MCF 10A (cell line): ENCODE measurements at regions of chr1 and their contacts with region 1.

Region 1: DNA sequence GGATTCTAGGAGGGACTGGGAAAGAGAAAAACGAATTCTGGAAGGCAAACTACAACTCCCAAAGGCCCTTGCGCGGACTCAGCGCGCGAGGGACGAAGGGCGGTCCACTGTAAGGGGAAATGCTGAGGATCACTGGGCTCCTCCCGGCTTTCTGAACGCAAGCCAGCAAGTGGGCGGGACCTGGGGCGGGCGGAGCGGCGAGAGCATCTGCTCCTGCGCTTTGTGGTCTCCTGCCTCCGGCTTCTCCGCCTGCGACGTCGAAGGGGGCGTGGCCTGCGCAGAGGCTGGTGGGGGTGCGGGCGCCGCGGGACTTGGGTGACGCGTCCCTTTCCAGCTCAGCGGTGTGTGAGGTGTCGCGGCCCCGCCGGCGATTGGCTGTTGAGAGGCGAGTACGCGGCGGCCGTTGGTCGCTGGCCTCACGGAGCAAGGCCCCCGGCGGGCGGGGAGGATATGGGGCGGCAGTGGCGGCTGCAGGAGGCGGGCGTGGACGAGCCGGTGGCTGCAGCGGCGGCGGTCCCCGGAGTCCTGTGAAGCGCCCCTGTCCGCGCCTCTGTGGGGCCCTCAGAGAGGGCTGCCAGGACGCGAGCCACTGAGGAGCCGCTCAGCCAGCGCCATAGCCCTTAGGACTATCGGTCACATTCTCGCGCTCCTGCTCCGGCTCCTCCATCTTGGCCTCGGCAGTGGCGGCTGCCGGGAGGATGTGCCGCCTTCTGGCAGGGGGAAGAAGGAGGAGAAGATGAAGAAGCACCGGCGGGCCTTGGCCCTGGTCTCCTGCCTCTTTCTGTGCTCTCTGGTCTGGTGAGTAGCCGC is at the start of gene SUCO:
- DNase-seq: peak; percentile 100
- H3K4me3 Mint-ChIP-seq: peak within 1 kb of the TSS; percentile 90
- H3K27ac Mint-ChIP-seq: peak within 1 kb of the TSS; percentile 98
- H3K4me1 Mint-ChIP-seq: peaks cover 38% of the 10 kb centered on the region
- H3K27me3 Mint-ChIP-seq: no peaks in the 10 kb centered on the region
- CTCF ChIP-seq: no peak
- total RNA-seq, gene SUCO: 47.9 and 54.3 TPM in 2 replicates

Region 2: GRCh38 chr1:172054172-172054571 is 478.7 kb before region 1 on chr1:
- CTCF ChIA-PET with region 1: no interaction called
- POLR2A ChIA-PET with region 1: no interaction called
- intact Hi-C with region 1: no loop called
- DNase-seq: peak; percentile 18
- H3K4me3 Mint-ChIP-seq: no peak overlapping the region
- H3K27ac Mint-ChIP-seq: no peak overlapping the region
- H3K4me1 Mint-ChIP-seq: peaks cover 6% of the 10 kb centered on the region
- H3K27me3 Mint-ChIP-seq: no peaks in the 10 kb centered on the region
- CTCF ChIP-seq: no peak

Region 3: DNA sequence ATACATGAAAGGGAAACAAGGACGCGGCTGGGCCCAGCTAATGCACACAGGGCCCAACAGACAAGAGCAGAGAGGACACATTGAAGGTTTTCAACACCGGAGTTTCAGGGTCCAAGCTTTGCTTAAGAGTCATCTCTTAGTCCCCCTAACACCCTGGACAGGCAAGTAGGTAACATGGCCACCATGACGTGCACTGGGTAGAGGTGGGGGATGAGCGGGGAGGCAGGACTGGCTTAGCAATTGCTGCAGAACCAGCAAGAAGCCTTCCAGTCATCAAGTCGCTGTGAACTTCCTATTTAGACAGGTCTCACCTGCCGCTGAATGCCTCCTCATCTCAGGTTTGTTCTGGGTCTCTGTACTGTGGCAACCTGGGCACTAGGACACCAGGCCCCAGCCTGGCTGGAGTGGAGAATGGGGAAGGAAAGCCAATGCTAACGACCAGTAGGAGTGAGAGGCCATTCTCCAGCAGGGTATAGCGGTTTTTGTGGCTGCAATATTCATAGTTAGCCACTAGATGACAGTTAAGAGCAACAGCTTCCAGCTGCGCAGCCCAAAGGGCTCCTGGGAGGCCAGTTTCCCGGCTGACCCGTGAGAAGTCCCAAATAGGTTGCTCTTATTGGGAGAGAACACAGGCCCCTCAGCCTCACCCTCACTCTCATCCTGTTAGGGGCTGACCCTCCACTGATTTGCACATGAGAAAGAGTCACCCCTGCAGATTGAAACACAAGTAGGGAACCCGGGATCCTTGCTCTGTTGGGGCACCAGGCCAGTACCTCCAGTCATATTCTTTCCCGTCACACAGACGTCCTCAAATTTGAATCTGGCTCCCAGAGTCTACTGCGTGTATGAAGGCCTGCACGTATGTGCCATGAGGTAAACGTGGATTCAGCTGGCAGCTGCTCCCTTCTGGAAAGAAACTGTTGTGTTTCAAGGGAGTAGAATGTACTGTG is 83.0 kb before region 1 on chr1:
- CTCF ChIA-PET with region 1: interaction called, 7 read pairs
- POLR2A ChIA-PET with region 1: interaction called, 43 read pairs
- intact Hi-C with region 1: loop called (anchors 1 kb)
- DNase-seq: peak; percentile 85
- H3K4me3 Mint-ChIP-seq: no peak overlapping the region
- H3K27ac Mint-ChIP-seq: peak overlapping the region; percentile 44
- H3K4me1 Mint-ChIP-seq: peaks cover 28% of the 10 kb centered on the region
- H3K27me3 Mint-ChIP-seq: no peaks in the 10 kb centered on the region
- CTCF ChIP-seq: peak; percentile 97

Region 4: DNA sequence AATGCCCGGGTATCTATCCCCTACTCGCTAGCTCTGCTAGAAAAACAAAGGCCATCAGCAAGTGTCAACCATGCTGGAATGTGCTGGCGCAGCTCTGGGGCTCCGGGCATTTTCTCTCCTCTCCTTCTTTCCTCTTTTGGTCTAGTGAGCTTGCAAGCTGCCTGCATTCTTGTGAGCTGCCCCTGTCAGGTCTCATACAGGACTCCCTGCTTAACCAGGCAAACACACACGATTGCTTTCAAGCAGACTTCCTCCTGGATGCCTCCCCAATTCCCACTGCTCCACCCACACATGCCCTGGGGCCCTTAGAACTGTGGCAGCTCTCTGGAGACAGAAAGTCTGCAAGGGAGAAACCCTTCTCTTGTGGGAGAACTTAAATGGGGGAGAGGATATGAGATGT is 35.7 kb before region 1 on chr1:
- CTCF ChIA-PET with region 1: interaction called, 4 read pairs
- POLR2A ChIA-PET with region 1: interaction called, 22 read pairs
- intact Hi-C with region 1: no loop called
- DNase-seq: peak; percentile 76
- H3K4me3 Mint-ChIP-seq: no peak overlapping the region
- H3K27ac Mint-ChIP-seq: no peak overlapping the region
- H3K4me1 Mint-ChIP-seq: peaks cover 12% of the 10 kb centered on the region
- H3K27me3 Mint-ChIP-seq: no peaks in the 10 kb centered on the region
- CTCF ChIP-seq: no peak

Region 5: GRCh38 chr1:172556461-172556860 is 23.6 kb after region 1 on chr1:
- CTCF ChIA-PET with region 1: interaction called, 5 read pairs
- POLR2A ChIA-PET with region 1: interaction called, 74 read pairs
- intact Hi-C with region 1: no loop called
- DNase-seq: no peak
- H3K4me3 Mint-ChIP-seq: no peak overlapping the region
- H3K27ac Mint-ChIP-seq: no peak overlapping the region
- H3K4me1 Mint-ChIP-seq: peaks cover 7% of the 10 kb centered on the region
- H3K27me3 Mint-ChIP-seq: no peaks in the 10 kb centered on the region
- CTCF ChIP-seq: no peak

Region 6: GRCh38 chr1:172662464-172663109 is 129.7 kb after region 1 on chr1:
- CTCF ChIA-PET with region 1: no interaction called
- POLR2A ChIA-PET with region 1: interaction called, 4 read pairs
- intact Hi-C with region 1: loop called (anchors 5 kb)
- DNase-seq: peak; percentile 74
- H3K4me3 Mint-ChIP-seq: no peak overlapping the region
- H3K27ac Mint-ChIP-seq: no peak overlapping the region
- H3K4me1 Mint-ChIP-seq: peaks cover 21% of the 10 kb centered on the region
- H3K27me3 Mint-ChIP-seq: no peaks in the 10 kb centered on the region
- CTCF ChIP-seq: no peak

Region 7: GRCh38 chr1:172673761-172674160 is 140.9 kb after region 1 on chr1:
- CTCF ChIA-PET with region 1: no interaction called
- POLR2A ChIA-PET with region 1: no interaction called
- intact Hi-C with region 1: no loop called
- DNase-seq: no peak
- H3K4me3 Mint-ChIP-seq: no peak overlapping the region
- H3K27ac Mint-ChIP-seq: peak overlapping the region; percentile 16
- H3K4me1 Mint-ChIP-seq: peaks cover 9% of the 10 kb centered on the region
- H3K27me3 Mint-ChIP-seq: no peaks in the 10 kb centered on the region
- CTCF ChIP-seq: no peak